WTC11 (cell line): ENCODE measurements at regions of chr19 and their contacts with region 1.

Region 1: DNA sequence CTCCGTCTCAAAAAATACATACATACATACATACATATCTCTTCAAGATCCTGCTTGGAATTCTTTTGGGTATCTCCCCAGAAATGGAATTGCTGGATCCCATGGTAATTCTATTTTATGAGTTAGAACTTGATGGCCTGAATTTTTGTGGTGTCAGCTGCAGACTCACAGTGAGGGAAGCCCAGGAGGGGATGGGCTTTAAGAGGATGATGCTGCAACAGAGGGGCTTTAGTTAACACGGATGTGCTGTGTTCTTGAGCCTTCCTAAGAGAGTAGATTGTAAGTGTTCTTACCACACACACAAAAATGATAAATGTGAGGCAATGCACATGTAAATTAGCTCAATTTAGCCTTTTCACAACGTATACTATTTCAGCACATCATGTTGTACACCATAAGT is 31.8 kb downstream of the CACNG6 start:
- DNase-seq: no peak
- ATAC-seq: no peak
- H3K4me3 Mint-ChIP-seq: no peak overlapping the region
- H3K27ac Mint-ChIP-seq: no peak overlapping the region
- H3K4me1 Mint-ChIP-seq: peaks cover 14% of the 10 kb centered on the region
- H3K27me3 Mint-ChIP-seq: peaks cover 14% of the 10 kb centered on the region
- CTCF ChIP-seq: no peak

Region 2: GRCh38 chr19:53808710-53809125 is 214.5 kb before region 1 on chr19:
- CTCF ChIA-PET with region 1: interaction called, 54 read pairs
- POLR2A ChIA-PET with region 1: interaction called, 8 read pairs
- DNase-seq: peak; percentile 40
- ATAC-seq: peak; percentile 74
- H3K4me3 Mint-ChIP-seq: no peak overlapping the region
- H3K27ac Mint-ChIP-seq: no peak overlapping the region
- H3K4me1 Mint-ChIP-seq: peaks cover 10% of the 10 kb centered on the region
- H3K27me3 Mint-ChIP-seq: peaks cover 9% of the 10 kb centered on the region
- CTCF ChIP-seq: no peak

Region 3: GRCh38 chr19:53906211-53907192 is 116.7 kb before region 1 on chr19:
- CTCF ChIA-PET with region 1: interaction called, 26 read pairs
- POLR2A ChIA-PET with region 1: no interaction called
- DNase-seq: peak; percentile 89
- ATAC-seq: peak; percentile 15
- H3K4me3 Mint-ChIP-seq: peak overlapping the region; percentile 88
- H3K27ac Mint-ChIP-seq: no peak overlapping the region; the same call in 1 of the 2 replicates
- H3K4me1 Mint-ChIP-seq: peaks cover 34% of the 10 kb centered on the region
- H3K27me3 Mint-ChIP-seq: peaks cover 61% of the 10 kb centered on the region
- CTCF ChIP-seq: peak; percentile 98

Region 4: GRCh38 chr19:53958168-53958571 is 65.0 kb before region 1 on chr19:
- CTCF ChIA-PET with region 1: interaction called, 14 read pairs
- POLR2A ChIA-PET with region 1: interaction called, 3 read pairs
- DNase-seq: peak; percentile 85
- ATAC-seq: peak; percentile 27
- H3K4me3 Mint-ChIP-seq: peak overlapping the region; percentile 79
- H3K27ac Mint-ChIP-seq: peak overlapping the region; percentile 77
- H3K4me1 Mint-ChIP-seq: peaks cover 49% of the 10 kb centered on the region
- H3K27me3 Mint-ChIP-seq: no peaks in the 10 kb centered on the region; the same call in 1 of the 2 replicates
- CTCF ChIP-seq: no peak

Region 5: DNA sequence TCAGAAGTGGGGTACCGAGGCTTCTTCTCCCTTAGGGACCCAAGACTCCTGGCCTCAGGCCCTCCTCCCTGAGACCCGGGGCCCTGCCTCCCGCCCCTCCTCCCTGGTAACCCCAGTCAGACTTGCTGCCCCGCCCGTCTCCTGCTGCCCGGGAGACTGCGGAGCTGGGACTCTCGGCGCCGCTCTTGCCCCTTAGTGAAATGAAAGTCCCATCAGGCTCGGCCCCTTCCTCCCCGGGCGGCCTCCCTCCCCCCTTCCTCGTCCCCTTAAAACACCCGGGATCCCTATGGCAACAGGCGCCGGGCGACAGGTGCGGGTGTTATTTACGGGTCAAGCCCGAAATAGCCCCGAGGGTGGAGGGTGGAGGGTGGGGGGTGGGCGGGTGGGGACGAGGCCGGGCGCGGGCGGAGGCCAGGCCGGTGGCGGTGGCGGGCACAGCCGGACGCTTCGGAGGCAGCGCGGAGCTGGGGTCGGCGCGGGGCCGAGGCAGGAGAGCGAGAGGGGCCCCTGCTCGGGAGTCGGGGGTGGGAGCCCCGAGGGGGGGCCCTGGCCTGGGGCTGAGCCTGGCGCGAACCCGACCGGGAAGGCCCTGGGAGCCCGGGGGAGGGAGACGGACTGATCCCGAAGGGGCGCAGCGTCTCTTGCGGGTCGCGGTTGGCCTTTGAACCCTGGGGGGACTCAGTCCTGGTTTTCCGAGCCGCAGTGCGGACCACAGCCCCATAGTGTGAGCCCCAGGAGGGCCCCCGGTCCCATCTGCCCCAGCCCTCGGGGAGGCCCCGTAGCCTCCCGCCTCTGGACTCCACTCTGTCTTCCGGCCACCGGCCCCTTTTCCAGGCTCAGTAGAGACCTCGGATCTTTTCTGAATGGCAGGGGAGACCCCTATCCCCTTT is 31.7 kb before region 1 on chr19 and contains the start of gene CACNG6:
- CTCF ChIA-PET with region 1: interaction called, 13 read pairs
- POLR2A ChIA-PET with region 1: interaction called, 3 read pairs
- DNase-seq: peak; percentile 69
- ATAC-seq: peak; percentile 60
- H3K4me3 Mint-ChIP-seq: peak within 1 kb of the TSS; percentile 68
- H3K27ac Mint-ChIP-seq: no peak within 1 kb of the TSS
- H3K4me1 Mint-ChIP-seq: peaks cover 16% of the 10 kb centered on the region
- H3K27me3 Mint-ChIP-seq: peaks cover 48% of the 10 kb centered on the region
- CTCF ChIP-seq: no peak
- total RNA-seq, gene CACNG6: 2.5 to 3.3 TPM (median 2.5 TPM) in 3 replicates

Region 6: DNA sequence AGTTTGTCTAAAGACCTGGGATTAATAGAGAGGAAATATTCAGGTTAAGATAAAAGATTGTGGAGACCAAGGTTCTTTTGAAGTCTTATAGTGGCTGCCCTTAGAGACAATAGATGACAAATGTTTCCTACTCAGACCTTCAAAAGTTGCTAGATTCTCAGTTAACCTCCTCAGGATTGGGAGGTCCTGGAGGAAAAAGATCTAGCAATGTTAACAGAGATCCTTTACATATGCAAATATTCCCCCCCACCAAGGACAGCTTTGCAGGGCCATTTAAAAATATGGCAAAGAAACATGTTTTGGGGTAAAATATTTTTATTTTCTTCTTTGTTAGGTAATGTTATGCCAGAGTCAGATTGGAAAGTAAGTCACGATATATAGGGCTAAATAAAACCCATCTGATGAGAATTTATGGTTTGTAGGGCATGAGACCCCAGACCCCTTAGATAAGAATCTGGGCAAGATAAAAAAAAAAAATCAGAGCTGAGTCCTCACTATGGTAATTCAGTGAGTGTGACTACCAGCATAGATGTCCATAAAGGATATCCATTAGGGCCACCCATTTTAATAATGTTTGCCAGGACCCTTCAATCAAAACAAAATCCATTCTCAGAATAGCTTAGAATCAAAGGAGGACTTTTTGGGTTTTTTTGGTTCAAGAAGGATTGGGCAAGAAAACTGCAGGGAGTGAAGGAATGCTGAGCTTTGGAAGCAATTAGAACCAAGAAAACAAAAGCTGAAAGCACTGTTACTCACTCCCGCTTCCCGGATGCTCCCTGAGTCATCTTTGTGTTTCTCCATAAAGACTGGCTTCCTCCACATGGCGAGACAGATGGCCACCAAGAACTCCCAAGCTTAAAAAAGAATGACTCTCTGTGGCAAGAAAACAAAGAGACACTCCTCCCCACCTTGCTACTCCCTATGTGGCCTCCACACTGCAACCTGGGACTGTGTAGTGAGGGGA is 12.3 kb after region 1 on chr19:
- CTCF ChIA-PET with region 1: interaction called, 20 read pairs
- POLR2A ChIA-PET with region 1: no interaction called
- DNase-seq: no peak
- ATAC-seq: peak; percentile 71
- H3K4me3 Mint-ChIP-seq: peak overlapping the region; percentile 24
- H3K27ac Mint-ChIP-seq: peak overlapping the region; percentile 99
- H3K4me1 Mint-ChIP-seq: peaks cover 53% of the 10 kb centered on the region
- H3K27me3 Mint-ChIP-seq: no peaks in the 10 kb centered on the region
- CTCF ChIP-seq: no peak

Region 7: GRCh38 chr19:54266133-54266532 is 242.9 kb after region 1 on chr19:
- CTCF ChIA-PET with region 1: no interaction called
- POLR2A ChIA-PET with region 1: no interaction called
- DNase-seq: peak; percentile 98
- ATAC-seq: peak; percentile 99
- H3K4me3 Mint-ChIP-seq: no peak overlapping the region
- H3K27ac Mint-ChIP-seq: no peak overlapping the region
- H3K4me1 Mint-ChIP-seq: peaks cover 3% of the 10 kb centered on the region; the same call in 1 of the 2 replicates
- H3K27me3 Mint-ChIP-seq: peaks cover 36% of the 10 kb centered on the region
- CTCF ChIP-seq: peak; percentile 93

Region 8: GRCh38 chr19:54281007-54281728 is 258.0 kb after region 1 on chr19 and contains the start of gene LILRB2:
- CTCF ChIA-PET with region 1: no interaction called
- POLR2A ChIA-PET with region 1: no interaction called
- DNase-seq: no peak
- ATAC-seq: no peak
- H3K4me3 Mint-ChIP-seq: no peak within 1 kb of the TSS
- H3K27ac Mint-ChIP-seq: no peak within 1 kb of the TSS
- H3K4me1 Mint-ChIP-seq: no peaks in the 10 kb centered on the region
- H3K27me3 Mint-ChIP-seq: peaks cover 11% of the 10 kb centered on the region
- CTCF ChIP-seq: no peak
- total RNA-seq, gene LILRB2: 0.11 TPM in 1 of 3 replicates, not detected in the others

Region 9: DNA sequence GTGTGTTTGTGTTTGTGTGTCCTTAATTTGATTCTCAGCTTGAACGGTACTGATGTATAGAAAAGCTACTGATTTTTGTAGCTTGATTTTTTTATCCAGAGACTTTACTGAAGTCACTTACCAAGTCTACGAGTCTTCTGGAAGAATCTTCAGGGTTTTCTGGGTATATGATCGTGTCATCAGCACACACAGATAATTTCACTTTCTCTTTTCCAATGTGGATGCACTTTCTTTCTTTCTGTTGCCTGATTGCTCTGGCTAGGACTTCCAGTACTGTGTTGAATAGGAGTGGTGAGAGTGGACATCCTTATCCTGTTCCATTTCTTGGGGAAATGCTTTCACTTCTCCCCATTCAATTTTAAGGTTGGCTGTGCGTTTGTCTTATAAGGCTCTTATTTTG is 599.2 kb after region 1 on chr19:
- CTCF ChIA-PET with region 1: no interaction called
- POLR2A ChIA-PET with region 1: no interaction called
- DNase-seq: no peak
- ATAC-seq: no peak
- H3K4me3 Mint-ChIP-seq: no peak overlapping the region
- H3K27ac Mint-ChIP-seq: no peak overlapping the region
- H3K4me1 Mint-ChIP-seq: no peaks in the 10 kb centered on the region
- H3K27me3 Mint-ChIP-seq: peaks cover 16% of the 10 kb centered on the region
- CTCF ChIP-seq: no peak